B cell (primary cell): ENCODE measurements at regions of chr5 and their contacts with region 1.

Region 1: GRCh38 chr5:96662725-96663513 is 743 bp downstream of the CAST start:
- DNase-seq: peak; percentile 91
- ATAC-seq: peak; percentile 74
- H3K4me3 ChIP-seq: peak overlapping the region; percentile 60 to 89 (median 83)
- H3K4me3 Mint-ChIP-seq: peak overlapping the region; percentile 100
- H3K27ac ChIP-seq: peak overlapping the region; percentile 85 to 89
- H3K27ac Mint-ChIP-seq: peak overlapping the region; percentile 100
- H3K4me1 ChIP-seq: peaks cover 16 to 21% of the 10 kb centered on the region in 2 donors
- H3K4me1 Mint-ChIP-seq: peaks cover 53% of the 10 kb centered on the region
- H3K27me3 ChIP-seq: no peaks in the 10 kb centered on the region
- H3K27me3 Mint-ChIP-seq: no peaks in the 10 kb centered on the region
- CTCF ChIP-seq: no peak

Region 2: GRCh38 chr5:95730730-95731570 is 932.0 kb before region 1 on chr5 and contains the start of gene RHOBTB3:
- CTCF ChIA-PET with region 1: no interaction called
- POLR2A ChIA-PET with region 1: interaction called, 12 read pairs
- intact Hi-C with region 1: no loop called
- DNase-seq: peak; percentile 61
- ATAC-seq: peak; percentile 70
- H3K4me3 ChIP-seq: peak within 1 kb of the TSS; percentile 51 to 75 (median 60)
- H3K4me3 Mint-ChIP-seq: peak within 1 kb of the TSS; percentile 90
- H3K27ac ChIP-seq: no peak within 1 kb of the TSS
- H3K27ac Mint-ChIP-seq: peak within 1 kb of the TSS; percentile 78
- H3K4me1 ChIP-seq: peaks cover 8 to 13% of the 10 kb centered on the region in 2 donors
- H3K4me1 Mint-ChIP-seq: peaks cover 29% of the 10 kb centered on the region
- H3K27me3 ChIP-seq: peaks cover 0 to 10% (median 6%) of the 10 kb centered on the region in 4 experiments
- H3K27me3 Mint-ChIP-seq: peaks cover 12% of the 10 kb centered on the region
- CTCF ChIP-seq: no peak
- total RNA-seq, gene RHOBTB3: 5.0 and 5.3 TPM in 2 replicates

Region 3: DNA sequence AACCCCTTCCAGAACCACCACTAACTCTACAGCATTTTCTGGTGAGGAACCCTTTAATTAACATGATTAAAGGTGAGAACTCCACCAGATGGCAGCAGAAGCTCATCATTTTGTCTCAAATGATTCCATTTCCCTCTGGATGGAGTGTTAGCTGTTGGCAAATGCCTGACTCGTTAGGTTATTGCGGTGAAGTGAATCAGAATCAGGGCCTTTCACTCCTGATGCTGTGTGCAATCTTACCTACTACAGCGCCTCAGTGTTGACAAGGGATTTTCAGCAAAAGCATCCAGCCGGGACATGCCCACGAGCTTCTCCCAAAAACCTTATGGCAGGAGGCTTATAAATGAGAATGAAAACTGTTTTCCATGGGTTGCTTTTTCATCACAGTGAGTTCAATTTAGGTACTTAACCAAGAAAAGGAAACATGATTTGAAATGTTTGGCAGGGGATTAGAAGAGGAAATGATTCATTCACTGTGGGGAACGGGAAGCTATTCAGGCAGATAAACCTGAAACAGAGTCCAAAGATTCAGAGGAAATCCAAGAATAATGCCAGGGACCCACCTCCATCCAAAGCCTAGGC is 48.7 kb before region 1 on chr5:
- CTCF ChIA-PET with region 1: interaction called, 6 read pairs
- POLR2A ChIA-PET with region 1: no interaction called
- intact Hi-C with region 1: loop called (anchors 1 kb)
- DNase-seq: peak; percentile 56
- ATAC-seq: no peak
- H3K4me3 ChIP-seq: no peak overlapping the region
- H3K4me3 Mint-ChIP-seq: no peak overlapping the region
- H3K27ac ChIP-seq: no peak overlapping the region
- H3K27ac Mint-ChIP-seq: no peak overlapping the region
- H3K4me1 ChIP-seq: peaks cover 0 to 3% of the 10 kb centered on the region in 2 donors
- H3K4me1 Mint-ChIP-seq: no peaks in the 10 kb centered on the region
- H3K27me3 ChIP-seq: peaks cover 0 to 6% (median 0%) of the 10 kb centered on the region in 4 experiments
- H3K27me3 Mint-ChIP-seq: peaks cover 18% of the 10 kb centered on the region
- CTCF ChIP-seq: peak; percentile 75

Region 4: GRCh38 chr5:96745844-96746531 is 83.1 kb after region 1 on chr5:
- CTCF ChIA-PET with region 1: no interaction called
- POLR2A ChIA-PET with region 1: no interaction called
- intact Hi-C with region 1: no loop called
- DNase-seq: no peak
- ATAC-seq: no peak
- H3K4me3 ChIP-seq: no peak overlapping the region
- H3K4me3 Mint-ChIP-seq: no peak overlapping the region
- H3K27ac ChIP-seq: no peak overlapping the region
- H3K27ac Mint-ChIP-seq: no peak overlapping the region
- H3K4me1 ChIP-seq: no peaks in the 10 kb centered on the region
- H3K4me1 Mint-ChIP-seq: no peaks in the 10 kb centered on the region
- H3K27me3 ChIP-seq: no peaks in the 10 kb centered on the region
- H3K27me3 Mint-ChIP-seq: no peaks in the 10 kb centered on the region
- CTCF ChIP-seq: no peak

Region 5: GRCh38 chr5:96807075-96807654 is 144.2 kb after region 1 on chr5:
- CTCF ChIA-PET with region 1: interaction called, 3 read pairs
- POLR2A ChIA-PET with region 1: interaction called, 12 read pairs
- intact Hi-C with region 1: loop called (anchors 1 kb)
- DNase-seq: no peak
- ATAC-seq: peak; percentile 19
- H3K4me3 ChIP-seq: peak overlapping the region; percentile 47 to 86 (median 73)
- H3K4me3 Mint-ChIP-seq: peak overlapping the region; percentile 90
- H3K27ac ChIP-seq: peak overlapping the region; percentile 86 to 90
- H3K27ac Mint-ChIP-seq: peak overlapping the region; percentile 99
- H3K4me1 ChIP-seq: peaks cover 25 to 32% of the 10 kb centered on the region in 2 donors
- H3K4me1 Mint-ChIP-seq: peaks cover 49% of the 10 kb centered on the region
- H3K27me3 ChIP-seq: no peaks in the 10 kb centered on the region
- H3K27me3 Mint-ChIP-seq: no peaks in the 10 kb centered on the region
- CTCF ChIP-seq: no peak

Region 6: GRCh38 chr5:97183100-97183929 is 520.4 kb after region 1 on chr5 and contains the start of gene RIOK2:
- CTCF ChIA-PET with region 1: no interaction called
- POLR2A ChIA-PET with region 1: interaction called, 3 read pairs
- intact Hi-C with region 1: loop called (anchors 1 kb)
- DNase-seq: peak; percentile 93
- ATAC-seq: peak; percentile 87
- H3K4me3 ChIP-seq: peak within 1 kb of the TSS; percentile 68 to 96 (median 88)
- H3K4me3 Mint-ChIP-seq: peak within 1 kb of the TSS; percentile 97
- H3K27ac ChIP-seq: peak within 1 kb of the TSS; percentile 91 to 99
- H3K27ac Mint-ChIP-seq: peak within 1 kb of the TSS; percentile 100
- H3K4me1 ChIP-seq: peaks cover 12 to 15% of the 10 kb centered on the region in 2 donors
- H3K4me1 Mint-ChIP-seq: peaks cover 33% of the 10 kb centered on the region
- H3K27me3 ChIP-seq: no peaks in the 10 kb centered on the region
- H3K27me3 Mint-ChIP-seq: no peaks in the 10 kb centered on the region
- CTCF ChIP-seq: no peak
- total RNA-seq, gene RIOK2: 32.8 and 37.2 TPM in 2 replicates